ENCODE measurements at regions of chr5 and their contacts with region 1.

Region 1: GRCh38 chr5:13674391-13674790 is 270.1 kb downstream of the DNAH5 start:
- DNase-seq: no peak
- ATAC-seq: no peak
- H3K4me3 ChIP-seq: no peak overlapping the region
- H3K27ac ChIP-seq: no peak overlapping the region
- H3K4me1 ChIP-seq: no peaks in the 10 kb centered on the region
- H3K27me3 ChIP-seq: no peaks in the 10 kb centered on the region
- CTCF ChIP-seq: no peak

Region 2: GRCh38 chr5:13692167-13692566 is 17.8 kb after region 1 on chr5:
- intact Hi-C with region 1: loop called in 1 of 2 experiments (anchors 1 kb)
- DNase-seq: no peak
- ATAC-seq: no peak
- H3K4me3 ChIP-seq: no peak overlapping the region
- H3K27ac ChIP-seq: no peak overlapping the region
- H3K4me1 ChIP-seq: no peaks in the 10 kb centered on the region
- H3K27me3 ChIP-seq: no peaks in the 10 kb centered on the region
- CTCF ChIP-seq: no peak

Measured in psoas muscle (tissue), 8 donors.